Stomach (tissue), 19 donors: ENCODE measurements at regions of chr2 and their contacts with region 1.

Region 1: DNA sequence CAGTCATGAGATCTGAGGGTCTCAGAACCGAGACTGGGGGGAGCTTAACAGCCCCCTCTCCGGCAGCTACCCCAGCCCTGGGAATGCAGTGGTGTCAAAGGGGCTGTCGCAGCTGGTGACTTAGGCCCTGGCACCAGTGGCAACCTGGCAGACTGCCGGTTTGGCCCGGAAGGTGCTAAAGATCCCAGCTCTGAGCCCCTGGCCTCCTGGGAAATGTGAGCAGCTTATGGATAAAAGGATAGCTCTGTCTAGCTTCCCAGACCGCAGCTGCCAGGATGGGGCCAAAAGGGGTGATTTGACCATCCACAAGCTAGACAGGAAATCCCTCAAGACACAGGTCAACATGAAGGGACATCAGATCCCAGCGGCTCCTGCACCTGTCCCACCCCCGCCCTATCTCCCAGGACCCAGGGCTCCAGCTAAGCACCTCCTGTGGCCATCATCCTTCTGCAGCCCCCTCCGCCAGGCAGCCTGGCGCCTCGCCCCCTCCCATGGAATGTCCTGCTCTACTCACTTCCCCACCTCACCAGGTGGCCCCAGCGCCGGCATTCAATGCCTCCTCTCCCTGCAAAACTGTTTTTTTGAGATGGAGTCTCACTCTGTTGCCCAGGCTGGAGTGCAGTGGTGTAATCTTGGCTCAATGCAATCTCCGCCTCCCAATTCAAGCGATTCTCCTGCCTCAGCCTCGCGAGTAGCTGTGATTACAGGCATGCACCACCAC is 33.2 kb upstream of the EFHD1 start:
- DNase-seq: no peak
- H3K4me3 ChIP-seq: no peak overlapping the region
- H3K27ac ChIP-seq: no peak overlapping the region
- H3K4me1 ChIP-seq: no peaks in the 10 kb centered on the region
- H3K27me3 ChIP-seq: no peaks in the 10 kb centered on the region
- CTCF ChIP-seq: no peak
- EP300 ChIP-seq: no peak
- POLR2A ChIP-seq: no peak

Region 2: DNA sequence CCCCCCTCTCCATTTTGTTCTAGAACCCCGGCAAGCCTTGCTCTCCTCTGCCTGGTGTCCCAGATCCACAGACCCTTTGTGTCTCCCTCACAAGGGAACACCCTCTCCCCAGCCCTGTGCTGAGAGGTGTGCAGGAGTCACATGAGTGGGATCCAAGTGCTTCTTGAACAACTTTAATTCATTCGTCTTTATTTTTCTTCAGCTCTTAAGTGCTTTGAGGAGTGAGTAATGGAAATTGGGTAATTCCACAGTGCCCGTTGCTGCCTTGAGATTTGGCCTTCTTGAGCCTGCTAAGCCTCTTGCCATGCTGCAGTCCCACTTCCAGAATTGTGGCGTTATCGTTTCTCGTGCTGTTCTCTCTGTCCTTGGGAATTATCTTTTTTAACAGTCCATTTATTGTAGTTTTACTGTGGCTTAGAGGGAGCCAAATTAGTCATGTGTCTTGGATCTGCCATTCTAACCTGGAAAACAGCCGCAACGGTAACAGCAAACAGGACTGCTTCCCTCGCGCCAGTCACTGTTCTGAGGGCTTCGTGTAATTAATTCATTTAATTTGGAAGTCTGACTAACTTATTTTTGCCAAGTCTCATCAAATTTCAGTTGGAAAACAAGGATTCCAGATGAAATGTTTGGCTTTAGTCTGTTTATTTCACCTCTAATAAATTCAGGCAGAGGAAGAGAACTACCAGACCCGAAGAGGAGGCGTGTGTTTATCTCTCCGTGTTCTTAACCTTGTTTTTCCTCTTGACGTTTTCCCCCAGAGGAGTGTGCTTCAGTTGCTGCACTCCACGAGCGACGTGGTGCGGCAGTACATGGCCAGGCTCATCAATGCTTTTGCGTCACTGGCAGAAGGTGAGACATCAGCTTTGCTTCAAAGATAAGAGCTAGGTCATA is 1329.7 kb before region 1 on chr2:
- intact Hi-C with region 1: no loop called
- DNase-seq: no peak
- H3K4me3 ChIP-seq: no peak overlapping the region
- H3K27ac ChIP-seq: peak overlapping the region in 1 of 5 donors; percentile 63
- H3K4me1 ChIP-seq: no peaks in the 10 kb centered on the region
- H3K27me3 ChIP-seq: no peaks in the 10 kb centered on the region
- CTCF ChIP-seq: no peak
- EP300 ChIP-seq: no peak
- POLR2A ChIP-seq: no peak

Region 3: GRCh38 chr2:233247765-233248164 is 647.6 kb after region 1 on chr2:
- intact Hi-C with region 1: loop called (anchors 10 kb)
- DNase-seq: no peak
- H3K4me3 ChIP-seq: no peak overlapping the region
- H3K27ac ChIP-seq: no peak overlapping the region
- H3K4me1 ChIP-seq: peaks cover 5 to 21% (median 7%) of the 10 kb centered on the region in 4 donors
- H3K27me3 ChIP-seq: no peaks in the 10 kb centered on the region
- CTCF ChIP-seq: no peak
- EP300 ChIP-seq: no peak
- POLR2A ChIP-seq: no peak